ENCODE measurements at regions of chr7 and their contacts with region 1.

Region 1: GRCh38 chr7:37901236-37901827 is 15.3 kb downstream of the SFRP4 start:
- DNase-seq: peak; percentile 13
- ATAC-seq: peak; percentile 55; the same call in 1 of the 2 replicates
- H3K4me3 ChIP-seq: no peak overlapping the region
- H3K27ac ChIP-seq: no peak overlapping the region
- H3K4me1 ChIP-seq: peaks cover 0 to 4% of the 10 kb centered on the region in 2 experiments; a peak in 1 of 4 replicates
- H3K27me3 ChIP-seq: no peaks in the 10 kb centered on the region
- CTCF ChIP-seq: peak; percentile 32 to 71 (median 50); a peak in 3 of 6 replicates
- POLR2A ChIP-seq: no peak
- RAD21 ChIP-seq: peak; percentile 65

Region 2: DNA sequence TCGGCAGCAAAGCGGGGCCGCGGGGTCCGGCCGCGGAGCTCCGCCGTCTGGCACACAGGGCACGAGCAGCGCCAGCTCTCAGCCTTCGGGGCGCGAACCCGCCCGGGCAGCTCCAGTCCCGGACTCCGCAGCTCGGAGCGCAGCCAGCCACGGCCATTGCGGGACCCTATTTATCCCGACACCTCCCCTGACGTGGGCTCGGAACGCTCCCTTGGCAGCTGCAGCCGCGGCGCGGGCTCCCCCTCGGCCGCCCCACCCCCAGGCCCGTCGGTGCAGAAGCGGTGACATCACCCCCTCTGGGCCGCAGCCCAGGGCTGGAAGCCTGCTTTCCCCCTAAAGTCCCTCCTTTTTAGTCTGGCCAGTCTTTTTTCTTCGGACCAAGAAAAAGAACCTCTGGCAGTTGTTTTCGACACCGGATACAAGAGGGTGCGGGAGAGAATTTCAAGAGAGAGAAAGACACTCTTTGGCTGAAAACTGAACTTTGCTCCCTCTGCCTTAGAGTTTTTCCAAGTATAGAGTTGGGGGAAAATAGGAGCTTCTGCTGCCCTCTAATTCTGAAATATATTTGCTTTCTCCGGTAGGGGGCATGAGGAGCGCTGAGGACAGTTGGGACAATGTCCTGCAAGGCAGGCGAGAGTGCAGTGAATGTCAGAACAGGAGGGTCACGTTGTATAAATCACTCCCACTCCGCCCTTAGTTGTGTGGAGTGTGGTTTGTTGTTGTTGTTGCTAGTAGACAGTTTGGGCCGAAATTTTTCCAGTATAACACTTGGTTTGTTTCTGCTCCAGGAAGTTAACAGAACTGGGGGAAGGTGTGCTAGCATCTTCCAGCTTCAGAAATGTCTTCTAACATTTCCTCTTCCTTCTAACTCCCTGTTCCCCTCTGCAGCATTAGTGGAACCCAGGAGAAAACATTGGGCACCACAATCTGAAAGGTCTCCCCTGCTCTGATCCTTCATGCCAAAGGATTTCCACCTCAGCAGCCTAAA is 15.6 kb after region 1 on chr7 and contains the start of gene SFRP4:
- CTCF ChIA-PET with region 1: interaction called, 14 read pairs
- POLR2A ChIA-PET with region 1: no interaction called
- RAD21 ChIA-PET with region 1: no interaction called
- intact Hi-C with region 1: no loop called
- DNase-seq: peak; percentile 34
- ATAC-seq: peak; percentile 67
- H3K4me3 ChIP-seq: peak within 1 kb of the TSS; percentile 12 to 35
- H3K27ac ChIP-seq: no peak within 1 kb of the TSS
- H3K4me1 ChIP-seq: peaks cover 9 to 14% of the 10 kb centered on the region in 2 experiments; a peak in 2 of 4 replicates
- H3K27me3 ChIP-seq: peaks cover 3% of the 10 kb centered on the region; the same call in 1 of the 2 replicates
- CTCF ChIP-seq: peak; percentile 43 to 68 (median 65); a peak in 5 of 6 replicates
- POLR2A ChIP-seq: no peak
- RAD21 ChIP-seq: peak; percentile 55
- total RNA-seq, gene SFRP4: 0.25 TPM

Region 3: DNA sequence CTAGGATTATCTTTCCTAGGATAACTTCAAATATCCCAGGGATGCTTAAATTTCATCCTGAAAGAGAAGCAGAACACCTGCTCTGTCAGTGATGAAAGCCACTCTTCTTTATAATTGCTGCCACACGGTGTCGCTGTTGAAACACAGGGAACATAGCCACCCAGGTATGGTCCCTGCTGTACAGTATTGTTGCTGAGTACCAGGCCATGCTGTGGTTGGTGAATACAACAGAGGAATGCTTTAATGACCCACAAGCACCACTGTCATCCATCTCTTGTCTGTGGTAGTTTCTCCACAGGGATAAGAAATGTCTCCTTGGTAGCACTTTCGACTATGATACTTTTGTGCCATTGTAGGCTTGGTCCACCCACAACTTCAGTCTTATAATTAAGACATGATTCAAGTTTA is 206.2 kb after region 1 on chr7:
- CTCF ChIA-PET with region 1: interaction called, 5 read pairs
- POLR2A ChIA-PET with region 1: no interaction called
- RAD21 ChIA-PET with region 1: no interaction called
- intact Hi-C with region 1: loop called (anchors 1 kb)
- DNase-seq: peak; percentile 48
- ATAC-seq: peak; percentile 94
- H3K4me3 ChIP-seq: no peak overlapping the region
- H3K27ac ChIP-seq: no peak overlapping the region
- H3K4me1 ChIP-seq: no peaks in the 10 kb centered on the region
- H3K27me3 ChIP-seq: peaks cover 20% of the 10 kb centered on the region
- CTCF ChIP-seq: peak; percentile 79 to 89 (median 79)
- POLR2A ChIP-seq: no peak
- RAD21 ChIP-seq: peak; percentile 72

Region 4: GRCh38 chr7:38369816-38370493 is 468.6 kb after region 1 on chr7:
- CTCF ChIA-PET with region 1: interaction called, 8 read pairs
- POLR2A ChIA-PET with region 1: no interaction called
- RAD21 ChIA-PET with region 1: no interaction called
- intact Hi-C with region 1: loop called (anchors 5 kb)
- DNase-seq: peak; percentile 80
- ATAC-seq: peak; percentile 91
- H3K4me3 ChIP-seq: no peak overlapping the region
- H3K27ac ChIP-seq: no peak overlapping the region
- H3K4me1 ChIP-seq: peaks cover 0 to 7% of the 10 kb centered on the region in 2 experiments; a peak in 2 of 4 replicates
- H3K27me3 ChIP-seq: no peaks in the 10 kb centered on the region
- CTCF ChIP-seq: peak; percentile 63 to 95 (median 94); a peak in 5 of 6 replicates
- POLR2A ChIP-seq: no peak
- RAD21 ChIP-seq: peak; percentile 20; the same call in 1 of the 2 replicates

Measured in HCT116 (cell line).